ENCODE measurements at regions of chr3 and their contacts with region 1.

Region 1: DNA sequence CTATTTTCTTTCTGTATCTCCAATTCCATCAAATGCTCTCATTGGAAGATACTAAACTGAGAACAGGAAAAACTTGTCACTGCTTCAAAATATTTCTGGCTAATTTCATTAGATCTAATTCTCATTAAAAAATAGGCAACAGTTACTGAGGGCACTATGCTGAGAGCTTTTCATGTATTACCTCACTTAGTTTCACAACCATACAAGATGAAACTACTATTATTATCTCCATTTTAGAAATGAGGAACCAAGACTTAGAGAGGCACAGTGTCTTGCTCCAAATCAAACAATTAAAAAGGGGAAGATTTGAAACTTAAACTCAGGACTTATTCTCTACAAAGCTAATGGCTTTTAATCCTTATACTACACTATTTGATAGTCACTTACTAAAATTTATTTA is 7.2 kb upstream of the OTOL1 start:
- DNase-seq: no peak
- H3K4me3 ChIP-seq: no peak overlapping the region
- H3K27ac ChIP-seq: no peak overlapping the region
- H3K4me1 ChIP-seq: no peaks in the 10 kb centered on the region
- H3K27me3 ChIP-seq: no peaks in the 10 kb centered on the region
- CTCF ChIP-seq: no peak
- POLR2A ChIP-seq: no peak

Region 2: GRCh38 chr3:162112719-162113118 is 623.3 kb after region 1 on chr3:
- intact Hi-C with region 1: loop called (anchors 5 kb)
- DNase-seq: no peak
- H3K4me3 ChIP-seq: no peak overlapping the region
- H3K27ac ChIP-seq: no peak overlapping the region
- H3K4me1 ChIP-seq: no peaks in the 10 kb centered on the region
- H3K27me3 ChIP-seq: no peaks in the 10 kb centered on the region
- CTCF ChIP-seq: no peak
- POLR2A ChIP-seq: no peak

Measured in breast epithelium (tissue), 4 donors.